ENCODE measurements at regions of chr2 and their contacts with region 1.

Region 1: DNA sequence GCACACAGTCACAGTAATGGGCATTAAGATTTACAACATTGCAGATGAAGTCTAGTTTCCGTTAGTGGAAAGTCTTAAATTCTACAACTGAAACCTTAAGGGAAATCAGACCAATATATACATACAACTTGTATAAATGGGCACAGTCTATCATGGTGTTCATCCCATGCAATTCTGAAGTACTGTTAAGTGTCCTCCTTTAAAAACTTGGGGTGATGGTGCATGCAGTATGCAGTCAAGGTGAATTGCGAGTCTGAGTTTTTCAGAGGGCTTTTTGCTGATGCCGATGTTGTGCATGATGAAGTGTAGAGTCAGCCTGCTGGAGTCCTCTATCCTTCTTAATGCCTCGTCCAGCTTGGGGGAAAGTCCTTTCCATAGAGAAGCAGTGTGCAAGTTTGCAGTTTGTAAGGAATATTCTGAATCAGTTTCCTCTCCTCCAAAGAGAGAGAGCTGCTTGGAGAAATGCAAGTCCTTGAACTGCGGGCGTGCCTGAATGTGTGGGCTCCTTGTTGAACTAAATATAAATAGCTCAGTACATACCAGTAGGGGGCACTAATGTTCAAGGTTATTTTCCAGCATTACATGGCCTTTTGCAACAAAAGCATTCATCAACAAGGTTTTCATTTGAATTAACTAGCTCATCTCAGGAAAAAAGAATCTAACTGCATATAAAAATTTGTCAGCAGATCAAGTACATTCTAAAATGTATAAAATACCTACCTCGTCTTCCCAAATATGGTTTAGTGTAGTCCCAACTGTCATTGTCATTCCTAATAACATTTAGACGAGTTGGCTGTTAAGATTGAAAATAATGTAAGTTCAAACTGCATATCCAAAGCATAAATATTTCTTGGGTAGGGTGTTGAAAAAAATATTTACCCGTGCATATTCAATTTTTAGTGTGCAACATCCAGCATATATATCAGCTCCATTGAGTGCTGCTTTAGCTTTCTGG is 21.3 kb downstream of the HNRNPLL start:
- DNase-seq: peak; percentile 36
- H3K4me3 Mint-ChIP-seq: no peak overlapping the region
- H3K27ac Mint-ChIP-seq: peak overlapping the region; percentile 61
- H3K4me1 Mint-ChIP-seq: peaks cover 74% of the 10 kb centered on the region
- H3K27me3 Mint-ChIP-seq: no peaks in the 10 kb centered on the region

Region 2: GRCh38 chr2:38454081-38454480 is 127.4 kb before region 1 on chr2:
- CTCF ChIA-PET with region 1: no interaction called
- POLR2A ChIA-PET with region 1: no interaction called
- DNase-seq: no peak
- H3K4me3 Mint-ChIP-seq: no peak overlapping the region
- H3K27ac Mint-ChIP-seq: no peak overlapping the region
- H3K4me1 Mint-ChIP-seq: no peaks in the 10 kb centered on the region
- H3K27me3 Mint-ChIP-seq: peaks cover 16% of the 10 kb centered on the region

Region 3: DNA sequence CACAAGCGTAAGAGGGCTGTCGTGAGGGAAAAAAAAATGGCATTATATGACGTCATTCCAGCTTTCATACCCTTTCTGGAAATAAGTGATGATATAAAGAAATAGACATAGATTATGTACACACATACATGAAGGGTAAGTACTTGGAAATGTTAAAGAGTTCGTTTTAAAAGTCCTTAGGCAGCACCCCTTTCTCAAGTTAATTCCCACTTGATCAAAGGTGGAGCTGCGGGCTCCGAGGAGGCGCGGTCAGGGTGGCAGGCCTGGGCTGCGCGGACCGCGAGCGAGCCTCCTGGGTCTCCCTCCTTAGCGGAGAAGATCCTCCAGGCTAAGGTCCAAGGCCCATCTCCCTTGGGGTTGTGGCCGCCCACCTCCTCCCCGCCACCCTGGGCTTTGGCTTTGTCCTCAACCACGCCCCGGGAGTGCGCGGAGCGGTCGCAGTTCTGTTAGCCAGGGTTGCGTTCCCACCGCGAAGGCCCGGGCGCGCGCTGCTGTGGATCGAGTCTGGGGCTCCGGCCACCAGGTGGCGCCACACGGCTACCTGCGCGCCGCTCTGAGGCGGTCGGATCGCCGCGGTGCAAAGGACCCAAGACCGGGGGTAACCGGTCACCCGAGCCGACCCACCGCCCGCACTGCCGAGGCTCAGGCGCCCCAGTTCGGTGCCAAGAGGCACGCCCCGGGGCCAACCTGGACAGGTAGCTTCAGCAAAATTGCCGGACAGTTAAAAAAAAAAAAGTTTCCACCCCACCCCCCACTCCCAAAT is 45.5 kb before region 1 on chr2:
- CTCF ChIA-PET with region 1: interaction called, 15 read pairs
- POLR2A ChIA-PET with region 1: interaction called, 3 read pairs
- DNase-seq: peak; percentile 81
- H3K4me3 Mint-ChIP-seq: peak overlapping the region; percentile 41
- H3K27ac Mint-ChIP-seq: no peak overlapping the region
- H3K4me1 Mint-ChIP-seq: peaks cover 10% of the 10 kb centered on the region
- H3K27me3 Mint-ChIP-seq: peaks cover 14% of the 10 kb centered on the region

Region 4: GRCh38 chr2:38596229-38596628 is 14.8 kb after region 1 on chr2:
- CTCF ChIA-PET with region 1: interaction called, 84 read pairs
- POLR2A ChIA-PET with region 1: interaction called, 33 read pairs
- DNase-seq: no peak
- H3K4me3 Mint-ChIP-seq: peak overlapping the region; percentile 89
- H3K27ac Mint-ChIP-seq: peak overlapping the region; percentile 84
- H3K4me1 Mint-ChIP-seq: peaks cover 68% of the 10 kb centered on the region
- H3K27me3 Mint-ChIP-seq: no peaks in the 10 kb centered on the region

Region 5: GRCh38 chr2:38665854-38666555 is 84.5 kb after region 1 on chr2 and contains the start of gene GALM:
- CTCF ChIA-PET with region 1: interaction called, 20 read pairs
- POLR2A ChIA-PET with region 1: interaction called, 16 read pairs
- DNase-seq: peak; percentile 74
- H3K4me3 Mint-ChIP-seq: peak within 1 kb of the TSS; percentile 98
- H3K27ac Mint-ChIP-seq: peak within 1 kb of the TSS; percentile 97
- H3K4me1 Mint-ChIP-seq: peaks cover 71% of the 10 kb centered on the region
- H3K27me3 Mint-ChIP-seq: no peaks in the 10 kb centered on the region
- total RNA-seq, gene GALM: 94.7 to 97.4 TPM

Region 6: DNA sequence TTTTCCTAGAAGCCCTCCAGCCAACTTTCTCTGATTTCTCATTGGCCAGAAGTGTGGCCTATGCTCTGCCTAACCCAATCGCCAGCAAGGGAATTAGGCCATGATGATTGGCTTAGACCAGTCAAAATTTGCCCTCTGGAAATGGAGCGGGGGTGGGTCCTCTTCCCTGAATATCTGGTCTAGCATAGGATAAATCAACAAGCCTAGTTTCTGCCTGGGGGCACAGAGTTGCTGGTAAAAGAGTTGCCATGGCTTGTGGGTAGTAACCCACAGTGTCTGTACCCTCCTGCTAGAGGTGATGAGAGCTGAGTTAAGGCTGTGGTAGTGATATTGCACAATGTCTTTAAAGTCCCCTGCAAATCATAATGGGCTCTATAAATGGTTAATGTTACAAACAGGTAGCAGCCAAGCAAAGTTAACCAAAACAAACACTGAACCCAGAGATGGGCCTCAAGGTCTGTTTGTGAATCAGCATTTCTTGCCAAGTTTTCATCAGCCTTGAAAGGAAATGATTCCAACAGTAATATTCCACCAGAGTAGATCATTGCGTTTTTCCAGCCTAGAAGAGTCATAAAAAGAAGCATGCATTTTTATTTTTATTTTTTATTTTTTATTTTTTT is 103.8 kb after region 1 on chr2:
- CTCF ChIA-PET with region 1: interaction called, 28 read pairs
- POLR2A ChIA-PET with region 1: interaction called, 10 read pairs
- DNase-seq: no peak
- H3K4me3 Mint-ChIP-seq: no peak overlapping the region
- H3K27ac Mint-ChIP-seq: peak overlapping the region; percentile 12
- H3K4me1 Mint-ChIP-seq: peaks cover 76% of the 10 kb centered on the region
- H3K27me3 Mint-ChIP-seq: no peaks in the 10 kb centered on the region

Region 7: DNA sequence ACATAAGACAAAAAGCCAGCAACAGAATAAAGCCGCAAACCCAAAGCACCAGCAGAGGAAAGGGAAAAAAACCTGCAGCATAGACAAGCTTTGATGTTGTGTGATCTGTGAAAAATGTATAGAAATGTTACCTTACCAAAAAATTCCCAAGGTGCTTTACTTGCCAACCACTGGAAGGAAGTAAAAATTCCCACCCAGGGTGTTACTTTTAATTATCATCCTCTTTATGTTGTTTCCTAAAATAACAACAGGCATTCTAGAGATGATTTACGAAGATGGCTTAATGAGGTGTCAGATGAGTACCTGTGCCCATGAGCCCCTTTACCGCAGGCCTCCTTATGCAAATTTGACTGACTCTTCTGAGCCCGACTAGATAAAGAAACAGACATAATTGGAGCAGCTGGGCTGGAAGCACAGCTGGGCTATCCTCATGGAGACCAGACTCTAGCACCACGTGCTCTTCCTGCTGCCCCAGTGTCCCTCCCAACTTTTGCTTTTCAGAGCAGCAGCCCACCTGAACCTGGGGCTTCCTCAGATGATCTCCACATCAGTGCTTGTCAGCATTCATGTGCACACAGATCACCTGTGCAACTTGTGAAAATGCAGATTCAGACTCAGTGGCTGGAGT is 128.2 kb after region 1 on chr2:
- CTCF ChIA-PET with region 1: interaction called, 19 read pairs
- POLR2A ChIA-PET with region 1: interaction called, 3 read pairs
- DNase-seq: peak; percentile 36
- H3K4me3 Mint-ChIP-seq: peak overlapping the region; percentile 24
- H3K27ac Mint-ChIP-seq: peak overlapping the region; percentile 95
- H3K4me1 Mint-ChIP-seq: peaks cover 75% of the 10 kb centered on the region
- H3K27me3 Mint-ChIP-seq: no peaks in the 10 kb centered on the region

Region 8: DNA sequence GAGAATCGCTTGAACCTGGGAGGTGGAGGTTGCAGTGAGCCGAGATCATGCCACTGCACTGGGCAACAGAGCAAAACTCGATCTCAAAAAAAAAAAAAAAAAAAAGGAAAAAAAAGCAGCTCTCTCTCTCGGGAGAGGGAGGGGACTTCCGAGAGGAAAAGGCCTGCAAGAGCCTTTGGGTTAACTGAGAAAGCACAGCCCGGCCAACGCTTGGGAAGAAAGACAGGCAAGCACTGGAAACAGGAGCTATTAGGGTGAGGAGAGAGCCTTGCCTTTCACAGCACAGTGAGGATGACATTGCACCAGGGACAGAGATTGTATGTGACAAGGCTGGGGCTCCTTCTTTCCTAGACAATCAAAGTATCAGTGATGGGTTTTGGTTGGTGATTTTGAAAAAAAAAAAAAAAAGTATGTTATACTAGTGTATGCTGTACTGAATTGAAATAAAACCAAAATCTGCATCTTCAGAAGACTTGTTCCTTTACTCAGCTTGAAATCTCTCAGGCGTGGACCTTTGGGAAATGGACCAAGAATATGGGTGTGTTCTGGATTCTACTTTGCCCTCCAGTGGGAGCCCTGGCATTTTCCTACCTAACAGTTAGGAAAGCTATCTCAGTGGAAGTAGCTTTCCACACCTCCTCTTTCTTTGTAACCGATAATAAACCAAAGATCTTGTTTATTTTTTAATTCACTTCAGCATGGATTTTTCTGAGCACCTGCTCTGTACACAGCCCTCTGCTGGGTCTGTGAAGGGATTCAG is 153.0 kb after region 1 on chr2:
- CTCF ChIA-PET with region 1: interaction called, 131 read pairs
- POLR2A ChIA-PET with region 1: interaction called, 3 read pairs
- DNase-seq: no peak
- H3K4me3 Mint-ChIP-seq: no peak overlapping the region
- H3K27ac Mint-ChIP-seq: no peak overlapping the region
- H3K4me1 Mint-ChIP-seq: peaks cover 15% of the 10 kb centered on the region
- H3K27me3 Mint-ChIP-seq: no peaks in the 10 kb centered on the region

Region 9: DNA sequence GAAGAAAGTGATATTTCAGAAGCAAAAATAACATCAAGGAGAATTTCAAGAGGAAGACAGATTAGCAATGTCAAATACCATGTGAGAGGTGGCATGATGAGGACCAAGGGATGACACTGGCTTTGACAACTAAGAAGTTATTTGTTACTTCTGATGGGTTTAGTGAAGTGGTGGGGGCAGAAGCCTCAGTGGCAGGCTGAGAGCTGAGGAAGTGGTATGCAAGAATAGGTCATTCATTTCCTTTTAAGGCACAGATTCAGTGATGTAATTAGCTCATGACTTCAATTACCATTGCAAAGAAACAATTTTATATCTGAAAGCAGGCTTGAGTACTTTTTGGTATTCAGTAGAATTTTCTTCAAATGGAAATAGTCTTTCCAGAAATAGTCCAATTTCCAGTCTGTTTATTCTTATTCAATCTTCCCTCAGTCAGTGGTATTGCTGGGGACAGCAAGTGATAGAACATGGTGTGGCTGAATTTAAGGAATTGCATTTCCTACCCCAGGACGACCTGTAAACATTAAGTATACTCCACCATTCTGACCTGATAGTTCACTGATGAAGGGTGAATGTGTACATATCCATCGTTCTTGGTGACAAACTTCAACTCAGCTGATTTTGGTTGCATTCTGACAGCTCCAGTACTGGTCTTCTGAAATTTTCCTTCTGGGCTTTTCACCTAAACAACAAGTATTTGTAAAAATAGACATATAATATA is 224.7 kb after region 1 on chr2:
- CTCF ChIA-PET with region 1: no interaction called
- POLR2A ChIA-PET with region 1: no interaction called
- DNase-seq: peak; percentile 18
- H3K4me3 Mint-ChIP-seq: no peak overlapping the region
- H3K27ac Mint-ChIP-seq: no peak overlapping the region
- H3K4me1 Mint-ChIP-seq: no peaks in the 10 kb centered on the region
- H3K27me3 Mint-ChIP-seq: no peaks in the 10 kb centered on the region

Measured in activated CD4-positive, alpha-beta memory T cell treated with anti-CD3 and anti-CD28 coated beads, Interleukin-2, amount 10 ng/mL, durations not matched to agents 7 days and 5 days (primary cell).